PC-3 (cell line): ENCODE measurements at regions of chrX and their contacts with region 1.

Region 1: GRCh38 chrX:54551801-54552200 is 21.8 kb downstream of the GNL3L start:
- DNase-seq: no peak
- ATAC-seq: no peak
- H3K4me3 ChIP-seq: no peak overlapping the region
- H3K27ac ChIP-seq: no peak overlapping the region
- H3K4me1 ChIP-seq: no peaks in the 10 kb centered on the region
- H3K27me3 ChIP-seq: no peaks in the 10 kb centered on the region
- CTCF ChIP-seq: no peak

Region 2: GRCh38 chrX:54470054-54470760 is 81.6 kb before region 1 on chrX:
- CTCF ChIA-PET with region 1: no interaction called
- POLR2A ChIA-PET with region 1: interaction called, 10 read pairs
- intact Hi-C with region 1: no loop called
- DNase-seq: no peak
- ATAC-seq: no peak
- H3K4me3 ChIP-seq: no peak overlapping the region
- H3K27ac ChIP-seq: no peak overlapping the region
- H3K4me1 ChIP-seq: peaks cover 12% of the 10 kb centered on the region
- H3K27me3 ChIP-seq: no peaks in the 10 kb centered on the region
- CTCF ChIP-seq: no peak